Activated T-helper 1 cell treated with anti-CD3 and anti-CD28 coated beads, Interleukin-12 subunit alpha, Interleukin-12 subunit beta, Interleukin-2, Interleukin-4 antibody, amounts not matched to agents 30 ng/mL and 10 ng/mL and 1 ng/mL, durations not matched to agents 14 hours and 24 hours and 36 hours (primary cell): ENCODE measurements at regions of chr16 and their contacts with region 1.

Region 1: GRCh38 chr16:23452572-23453337 is at the start of gene COG7:
- DNase-seq: peak; percentile 83
- H3K4me3 Mint-ChIP-seq: peak within 1 kb of the TSS; percentile 98
- H3K27ac Mint-ChIP-seq: peak within 1 kb of the TSS; percentile 95
- H3K4me1 Mint-ChIP-seq: peaks cover 30% of the 10 kb centered on the region
- H3K27me3 Mint-ChIP-seq: peaks cover 1% of the 10 kb centered on the region
- total RNA-seq, gene COG7: 23.5 and 24.1 TPM in 2 replicates

Region 2: GRCh38 chr16:23149349-23149996 is 303.3 kb before region 1 on chr16 and contains the start of gene USP31:
- intact Hi-C with region 1: loop called (anchors 1 kb)
- DNase-seq: peak; percentile 89
- H3K4me3 Mint-ChIP-seq: peak within 1 kb of the TSS; percentile 96
- H3K27ac Mint-ChIP-seq: peak within 1 kb of the TSS; percentile 96
- H3K4me1 Mint-ChIP-seq: peaks cover 31% of the 10 kb centered on the region
- H3K27me3 Mint-ChIP-seq: peaks cover 11% of the 10 kb centered on the region
- total RNA-seq, gene USP31: 11.3 and 11.6 TPM in 2 replicates

Region 3: DNA sequence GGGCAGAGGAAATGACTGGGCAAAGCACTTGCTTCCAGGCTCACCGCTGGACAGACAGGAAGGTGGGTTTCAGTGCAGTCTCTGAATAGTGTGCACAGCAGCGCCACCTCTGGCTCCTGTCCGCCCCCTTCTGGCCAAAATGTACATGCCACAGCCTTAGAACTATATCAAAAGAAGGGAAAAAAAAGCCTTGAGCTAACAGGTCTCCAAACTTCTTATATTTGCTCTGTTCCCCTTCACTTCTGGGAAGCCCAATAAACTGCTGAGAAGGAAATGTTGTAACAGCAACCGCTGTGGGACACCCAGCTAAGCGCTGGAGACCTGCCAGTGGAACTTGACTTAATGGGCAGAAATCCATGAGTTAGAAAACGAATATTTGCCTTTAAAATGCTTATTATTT is 17.3 kb before region 1 on chr16:
- intact Hi-C with region 1: loop called (anchors 2 kb)
- DNase-seq: peak; percentile 40
- H3K4me3 Mint-ChIP-seq: no peak overlapping the region
- H3K27ac Mint-ChIP-seq: no peak overlapping the region
- H3K4me1 Mint-ChIP-seq: no peaks in the 10 kb centered on the region
- H3K27me3 Mint-ChIP-seq: no peaks in the 10 kb centered on the region

Region 4: DNA sequence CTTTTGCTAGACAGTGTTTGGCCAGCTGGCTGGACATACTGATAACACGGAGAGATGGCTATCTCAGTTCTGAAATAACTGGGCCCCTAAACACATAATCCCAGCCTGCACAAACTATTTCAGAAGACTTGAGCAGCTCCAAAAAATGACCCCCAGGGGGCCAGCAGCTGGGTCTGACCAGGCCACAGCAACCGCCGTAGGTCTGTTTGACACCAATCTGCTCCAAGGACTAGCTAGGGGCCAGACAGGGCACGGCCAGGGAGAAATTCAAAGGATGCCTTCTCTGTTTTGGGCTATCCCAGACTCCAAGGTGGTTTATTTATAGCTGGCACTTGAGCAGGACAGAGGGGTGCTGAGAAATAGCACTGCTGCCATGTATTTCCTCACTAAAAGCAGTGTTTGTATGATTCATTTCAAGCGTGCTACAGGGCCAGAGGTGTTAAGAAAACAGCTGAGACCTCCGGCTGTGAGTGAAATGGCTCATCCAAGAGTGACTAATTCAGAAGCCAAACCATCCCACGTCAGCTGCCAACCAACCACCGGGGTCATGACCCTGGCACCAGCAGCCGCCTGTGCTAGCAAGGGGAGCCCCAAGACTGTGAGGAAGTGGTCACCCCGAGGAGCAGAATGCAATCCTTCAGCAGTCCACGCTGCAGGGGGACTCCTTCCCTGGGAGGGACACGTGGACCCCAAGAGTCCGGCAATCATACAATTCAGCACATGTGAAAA is 51.9 kb after region 1 on chr16:
- intact Hi-C with region 1: loop called (anchors 2 kb)
- DNase-seq: peak; percentile 68
- H3K4me3 Mint-ChIP-seq: peak overlapping the region; percentile 46
- H3K27ac Mint-ChIP-seq: peak overlapping the region; percentile 79
- H3K4me1 Mint-ChIP-seq: peaks cover 72% of the 10 kb centered on the region
- H3K27me3 Mint-ChIP-seq: no peaks in the 10 kb centered on the region

Region 5: DNA sequence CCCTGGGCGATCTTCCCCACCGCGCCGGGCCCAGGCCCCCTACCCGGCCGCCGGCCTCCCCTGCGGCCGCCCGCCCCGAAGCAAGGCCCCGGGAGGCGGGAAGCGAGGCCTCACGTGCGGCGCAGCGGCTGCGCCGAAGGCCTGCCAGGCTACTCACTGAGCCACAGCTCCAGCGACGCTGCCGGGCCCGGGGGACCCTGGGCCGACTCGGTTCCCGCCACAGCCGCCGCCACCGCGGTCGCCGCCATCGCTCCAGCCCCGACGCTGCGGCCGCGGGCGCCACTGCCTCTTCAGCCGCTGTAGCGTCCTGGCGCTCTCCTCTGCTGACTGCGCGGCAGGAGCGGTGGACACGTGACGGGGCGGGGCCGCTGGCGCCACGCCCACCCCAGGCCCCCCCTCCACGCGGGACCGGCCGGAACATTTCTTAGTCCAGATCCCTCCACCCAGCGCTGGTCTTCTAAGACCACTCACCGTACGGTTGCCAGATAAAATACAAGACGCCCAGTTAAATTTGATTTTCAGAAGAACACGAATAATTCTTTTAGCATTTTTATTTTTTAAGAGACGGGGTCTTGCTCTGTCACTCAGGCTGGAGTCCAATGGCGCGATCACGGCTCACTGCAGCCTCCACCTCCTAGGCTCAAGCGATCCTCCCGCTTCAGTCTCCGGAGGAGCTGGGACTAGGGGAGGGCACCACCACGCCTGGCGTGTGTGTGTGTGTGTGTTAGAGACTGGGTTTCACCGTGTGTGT is 57.6 kb after region 1 on chr16 and contains the start of gene GGA2:
- intact Hi-C with region 1: loop called (anchors 1 kb)
- DNase-seq: peak; percentile 74
- H3K4me3 Mint-ChIP-seq: peak within 1 kb of the TSS; percentile 89
- H3K27ac Mint-ChIP-seq: peak within 1 kb of the TSS; percentile 87
- H3K4me1 Mint-ChIP-seq: peaks cover 50% of the 10 kb centered on the region
- H3K27me3 Mint-ChIP-seq: no peaks in the 10 kb centered on the region
- total RNA-seq, gene GGA2: 106 and 112 TPM in 2 replicates

Region 6: GRCh38 chr16:23595951-23596720 is 143.4 kb after region 1 on chr16 and contains the start of gene NDUFAB1:
- intact Hi-C with region 1: loop called (anchors 1 kb)
- DNase-seq: peak; percentile 90
- H3K4me3 Mint-ChIP-seq: peak within 1 kb of the TSS; percentile 88
- H3K27ac Mint-ChIP-seq: peak within 1 kb of the TSS; percentile 80
- H3K4me1 Mint-ChIP-seq: peaks cover 30% of the 10 kb centered on the region
- H3K27me3 Mint-ChIP-seq: no peaks in the 10 kb centered on the region
- total RNA-seq, gene NDUFAB1: 146 and 148 TPM in 2 replicates

Region 7: DNA sequence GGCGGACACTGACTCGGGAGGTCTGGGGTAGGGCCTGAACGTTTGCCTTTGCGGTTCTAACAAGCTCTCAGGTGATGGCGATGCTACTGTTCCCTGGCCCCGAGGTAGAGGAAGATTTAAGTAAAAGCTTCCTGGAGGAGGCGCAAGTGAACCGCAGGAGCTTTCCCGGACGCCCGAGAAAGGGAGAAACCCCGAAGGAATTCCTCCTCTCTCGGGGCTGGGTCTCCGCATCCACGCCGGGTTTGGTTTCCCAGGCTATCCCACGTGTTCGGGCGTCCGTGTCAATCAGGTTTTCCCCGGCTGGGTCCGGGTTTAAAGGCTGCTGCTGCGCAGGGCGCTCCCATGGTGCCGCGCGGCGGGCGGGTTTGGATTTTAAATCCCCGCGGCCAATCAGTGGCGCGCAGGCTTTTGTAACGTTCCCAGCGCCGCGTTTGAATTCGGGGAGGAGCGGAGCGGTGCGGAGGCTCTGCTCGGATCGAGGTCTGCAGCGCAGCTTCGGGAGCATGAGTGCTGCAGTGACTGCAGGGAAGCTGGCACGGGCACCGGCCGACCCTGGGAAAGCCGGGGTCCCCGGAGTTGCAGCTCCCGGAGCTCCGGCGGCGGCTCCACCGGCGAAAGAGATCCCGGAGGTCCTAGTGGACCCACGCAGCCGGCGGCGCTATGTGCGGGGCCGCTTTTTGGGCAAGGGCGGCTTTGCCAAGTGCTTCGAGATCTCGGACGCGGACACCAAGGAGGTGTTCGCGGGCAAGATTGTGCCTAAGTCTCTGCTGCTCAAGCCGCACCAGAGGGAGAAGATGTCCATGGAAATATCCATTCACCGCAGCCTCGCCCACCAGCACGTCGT is 225.9 kb after region 1 on chr16 and contains the start of gene PLK1:
- intact Hi-C with region 1: loop called (anchors 5 kb)
- DNase-seq: peak; percentile 81
- H3K4me3 Mint-ChIP-seq: peak within 1 kb of the TSS; percentile 94
- H3K27ac Mint-ChIP-seq: peak within 1 kb of the TSS; percentile 84
- H3K4me1 Mint-ChIP-seq: peaks cover 34% of the 10 kb centered on the region
- H3K27me3 Mint-ChIP-seq: no peaks in the 10 kb centered on the region
- total RNA-seq, gene PLK1: 45.2 and 54.7 TPM in 2 replicates